Activated naive CD4-positive, alpha-beta T cell treated with anti-CD3 and anti-CD28 coated beads for 36 hours (primary cell): ENCODE measurements at regions of chr18 and their contacts with region 1.

Region 1: GRCh38 chr18:63422087-63422809 is at the start of gene VPS4B:
- DNase-seq: peak; percentile 100
- H3K4me3 Mint-ChIP-seq: peak within 1 kb of the TSS; percentile 83
- H3K27ac Mint-ChIP-seq: peak within 1 kb of the TSS; percentile 95
- H3K4me1 Mint-ChIP-seq: peaks cover 28% of the 10 kb centered on the region
- H3K27me3 Mint-ChIP-seq: no peaks in the 10 kb centered on the region
- total RNA-seq, gene VPS4B: 28.7 to 30.1 TPM

Region 2: DNA sequence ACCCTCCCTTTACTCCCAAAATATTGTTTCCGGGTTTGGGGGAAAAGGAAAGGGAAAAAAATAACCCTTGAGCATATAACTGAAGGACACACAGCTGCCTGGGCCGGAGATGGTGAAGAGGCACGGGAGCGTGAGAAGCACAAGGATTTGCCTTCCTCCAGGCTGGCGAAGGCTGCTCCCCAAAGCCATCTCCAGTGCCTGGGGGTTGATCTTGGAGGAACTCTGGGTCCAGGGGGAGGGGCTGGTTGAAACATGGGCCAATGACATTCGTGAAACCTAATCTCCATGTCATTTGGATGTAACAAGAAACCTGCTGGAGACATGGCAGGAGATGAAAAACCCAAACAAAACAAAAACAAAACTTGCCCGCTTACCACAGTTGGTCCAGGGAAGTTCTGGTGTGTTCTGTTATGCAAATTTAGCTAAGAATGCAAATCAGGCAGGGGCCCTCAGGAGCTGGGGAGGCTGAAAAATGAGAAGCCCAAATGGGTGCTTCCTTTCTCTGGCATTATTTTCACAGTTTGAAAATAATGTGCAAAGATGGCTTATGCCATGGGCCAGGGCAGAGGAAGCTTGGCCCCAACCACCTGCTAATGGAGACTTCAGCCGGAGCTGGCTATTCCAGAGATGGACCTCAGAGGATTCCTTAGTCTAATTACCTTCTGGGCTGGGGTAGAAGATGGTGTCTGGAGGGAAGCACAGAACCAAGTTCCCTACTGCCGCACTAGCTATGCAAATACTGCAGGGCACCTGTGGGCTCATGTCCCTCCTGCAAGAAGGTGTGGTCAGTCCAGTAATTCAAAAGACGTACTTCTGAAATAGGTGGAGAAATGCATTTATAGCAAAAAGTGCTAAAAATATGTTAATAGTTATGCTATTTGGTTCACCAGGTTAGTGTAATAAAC is 283.6 kb before region 1 on chr18:
- CTCF ChIA-PET with region 1: no interaction called
- intact Hi-C with region 1: loop called (anchors 1 kb)
- DNase-seq: peak; percentile 65
- H3K4me3 Mint-ChIP-seq: peak overlapping the region; percentile 75
- H3K27ac Mint-ChIP-seq: peak overlapping the region; percentile 82
- H3K4me1 Mint-ChIP-seq: peaks cover 65% of the 10 kb centered on the region
- H3K27me3 Mint-ChIP-seq: no peaks in the 10 kb centered on the region

Region 3: GRCh38 chr18:63207143-63207790 is 215.0 kb before region 1 on chr18:
- CTCF ChIA-PET with region 1: no interaction called
- intact Hi-C with region 1: loop called (anchors 5 kb)
- DNase-seq: peak; percentile 50
- H3K4me3 Mint-ChIP-seq: peak overlapping the region; percentile 71
- H3K27ac Mint-ChIP-seq: peak overlapping the region; percentile 86
- H3K4me1 Mint-ChIP-seq: peaks cover 95% of the 10 kb centered on the region
- H3K27me3 Mint-ChIP-seq: no peaks in the 10 kb centered on the region

Region 4: DNA sequence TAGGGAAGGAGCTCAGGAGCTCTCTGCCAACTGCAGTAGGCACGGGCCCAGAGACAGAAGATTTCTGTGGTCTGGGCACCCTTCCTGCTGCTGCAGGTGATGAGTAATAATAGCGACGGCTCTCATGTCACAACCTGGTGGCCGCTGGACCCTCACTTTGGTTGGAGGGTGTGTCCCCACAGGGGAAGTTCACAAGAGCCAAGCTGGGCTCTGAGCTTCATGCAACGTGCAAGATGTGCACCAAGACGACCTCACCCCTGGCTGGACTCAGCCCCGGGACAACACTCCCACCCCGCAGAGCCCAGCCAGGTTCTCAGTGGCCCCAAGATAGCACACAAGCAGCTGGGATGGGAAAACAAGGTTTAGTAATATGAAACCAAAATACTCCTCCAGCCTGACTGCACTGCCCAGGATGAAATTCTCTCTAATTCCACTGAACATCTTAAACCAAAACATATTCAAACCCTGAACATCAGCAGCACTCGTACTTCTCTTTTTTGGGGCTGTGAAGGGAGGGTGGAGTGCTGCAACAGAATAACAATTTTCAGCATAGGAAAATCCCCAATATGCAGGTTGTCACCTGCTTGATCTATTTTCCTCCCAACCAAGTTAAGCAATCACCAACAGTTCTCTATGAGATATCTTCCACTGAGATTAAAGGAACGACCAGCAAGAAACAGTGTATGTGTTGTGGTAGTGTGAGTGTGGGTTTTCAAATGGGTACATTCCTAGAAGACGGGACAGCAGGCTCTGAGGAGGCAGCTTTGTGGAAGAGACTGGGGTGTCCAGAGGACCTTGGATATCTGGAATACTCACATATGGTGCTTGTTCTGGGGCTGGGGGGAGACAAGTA is 129.2 kb before region 1 on chr18:
- CTCF ChIA-PET with region 1: no interaction called
- intact Hi-C with region 1: no loop called
- DNase-seq: peak; percentile 41
- H3K4me3 Mint-ChIP-seq: peak overlapping the region; percentile 12
- H3K27ac Mint-ChIP-seq: peak overlapping the region; percentile 55
- H3K4me1 Mint-ChIP-seq: peaks cover 10% of the 10 kb centered on the region
- H3K27me3 Mint-ChIP-seq: no peaks in the 10 kb centered on the region

Region 5: GRCh38 chr18:63339920-63340484 is 82.2 kb before region 1 on chr18:
- CTCF ChIA-PET with region 1: interaction called, 4 read pairs
- intact Hi-C with region 1: loop called (anchors 5 kb)
- DNase-seq: peak; percentile 65
- H3K4me3 Mint-ChIP-seq: no peak overlapping the region
- H3K27ac Mint-ChIP-seq: no peak overlapping the region
- H3K4me1 Mint-ChIP-seq: peaks cover 12% of the 10 kb centered on the region
- H3K27me3 Mint-ChIP-seq: no peaks in the 10 kb centered on the region

Region 6: GRCh38 chr18:63378919-63379638 is 43.2 kb before region 1 on chr18:
- CTCF ChIA-PET with region 1: no interaction called
- intact Hi-C with region 1: loop called (anchors 1 kb)
- DNase-seq: no peak
- H3K4me3 Mint-ChIP-seq: peak overlapping the region; percentile 49
- H3K27ac Mint-ChIP-seq: peak overlapping the region; percentile 64
- H3K4me1 Mint-ChIP-seq: peaks cover 17% of the 10 kb centered on the region
- H3K27me3 Mint-ChIP-seq: no peaks in the 10 kb centered on the region

Region 7: DNA sequence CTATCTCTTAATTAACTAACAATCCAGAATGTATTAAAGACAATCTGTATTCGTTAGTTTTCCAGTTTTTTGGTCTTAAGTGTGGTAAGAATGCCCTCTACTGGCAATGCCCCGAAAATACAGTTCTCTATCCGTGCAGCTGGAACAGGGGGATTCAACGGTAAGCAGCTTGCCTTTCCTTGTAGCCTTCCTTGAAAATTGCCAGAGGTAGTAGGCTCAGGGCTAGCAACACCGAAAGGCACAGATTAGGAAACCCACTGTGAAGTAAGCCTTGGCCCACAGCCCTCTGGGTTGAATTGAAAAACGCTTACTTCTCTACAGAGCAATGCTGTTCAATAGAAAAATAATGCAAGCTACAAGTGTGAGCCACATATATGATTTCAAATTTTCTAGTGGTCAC is 17.1 kb after region 1 on chr18:
- CTCF ChIA-PET with region 1: interaction called, 19 read pairs
- intact Hi-C with region 1: no loop called
- DNase-seq: peak; percentile 60
- H3K4me3 Mint-ChIP-seq: no peak overlapping the region
- H3K27ac Mint-ChIP-seq: no peak overlapping the region
- H3K4me1 Mint-ChIP-seq: peaks cover 2% of the 10 kb centered on the region
- H3K27me3 Mint-ChIP-seq: no peaks in the 10 kb centered on the region

Region 8: DNA sequence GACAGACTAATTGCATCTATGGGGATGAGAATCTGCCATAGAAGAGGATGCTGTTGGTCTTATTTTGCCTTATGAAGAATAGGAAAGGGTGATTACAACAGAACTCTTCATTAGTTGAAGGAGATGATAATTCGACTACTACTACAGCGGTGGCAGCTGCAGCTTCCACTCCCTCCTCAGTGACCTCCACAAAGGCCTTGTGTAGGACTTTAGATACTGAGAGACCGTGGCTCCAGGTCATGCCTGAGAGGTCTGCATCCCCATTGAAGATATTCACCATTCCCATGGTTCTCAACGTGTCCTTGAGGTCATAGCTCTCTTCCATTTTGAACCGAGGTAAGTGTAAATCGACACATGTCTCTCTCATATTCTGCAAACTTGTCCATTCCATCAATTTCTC is 215.5 kb after region 1 on chr18:
- CTCF ChIA-PET with region 1: no interaction called
- intact Hi-C with region 1: no loop called
- DNase-seq: no peak
- H3K4me3 Mint-ChIP-seq: no peak overlapping the region
- H3K27ac Mint-ChIP-seq: no peak overlapping the region
- H3K4me1 Mint-ChIP-seq: no peaks in the 10 kb centered on the region
- H3K27me3 Mint-ChIP-seq: peaks cover 1% of the 10 kb centered on the region

Region 9: DNA sequence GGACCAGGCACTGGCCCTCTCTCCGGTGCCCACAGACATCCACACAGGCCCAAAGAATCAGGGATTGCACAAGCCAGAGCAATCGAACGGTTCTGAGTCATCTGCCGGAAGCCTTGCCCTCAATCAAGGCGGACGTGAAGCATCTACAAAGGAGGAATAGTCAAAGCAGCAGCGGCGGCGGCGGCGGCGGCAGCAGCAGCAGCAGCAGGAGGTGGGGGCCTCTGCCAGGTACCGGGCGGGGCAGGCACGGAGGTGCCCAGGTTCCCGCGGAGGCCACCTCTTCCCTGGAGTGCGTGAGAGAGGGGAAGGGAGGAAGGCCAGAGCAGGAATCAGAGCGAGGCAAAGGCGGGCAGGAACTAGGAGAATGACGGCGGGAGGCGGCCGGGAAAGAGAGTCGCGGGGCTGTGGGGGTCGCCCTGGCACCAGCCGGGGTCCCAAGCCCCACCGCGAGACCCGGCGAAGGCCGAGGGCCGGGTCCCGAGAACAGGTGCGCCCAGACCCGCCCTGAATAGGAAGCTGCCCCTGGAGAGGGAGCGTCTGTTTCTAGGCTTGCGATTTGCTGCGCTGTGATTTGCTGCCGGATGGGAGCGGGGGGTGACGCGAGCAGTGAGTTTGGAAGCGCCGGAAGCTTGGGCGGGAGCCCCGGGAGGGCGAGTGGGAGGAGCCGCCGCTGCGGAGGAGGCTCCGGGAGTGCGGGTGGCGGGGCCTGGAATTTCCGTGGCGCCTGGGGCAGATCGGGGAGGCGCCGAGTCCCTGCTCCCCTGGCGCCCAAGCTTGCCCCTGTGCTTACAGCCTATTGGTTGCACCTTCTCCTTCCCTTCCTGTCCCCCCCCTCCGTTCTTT is 547.9 kb after region 1 on chr18 and contains the start of gene SERPINB8:
- CTCF ChIA-PET with region 1: no interaction called
- intact Hi-C with region 1: loop called (anchors 1 kb)
- DNase-seq: peak; percentile 91
- H3K4me3 Mint-ChIP-seq: peak within 1 kb of the TSS; percentile 93
- H3K27ac Mint-ChIP-seq: peak within 1 kb of the TSS; percentile 97
- H3K4me1 Mint-ChIP-seq: peaks cover 35% of the 10 kb centered on the region
- H3K27me3 Mint-ChIP-seq: no peaks in the 10 kb centered on the region
- total RNA-seq, gene SERPINB8: 10.5 to 11.7 TPM